ENCODE measurements at regions of chr7 and their contacts with region 1.

Region 1: DNA sequence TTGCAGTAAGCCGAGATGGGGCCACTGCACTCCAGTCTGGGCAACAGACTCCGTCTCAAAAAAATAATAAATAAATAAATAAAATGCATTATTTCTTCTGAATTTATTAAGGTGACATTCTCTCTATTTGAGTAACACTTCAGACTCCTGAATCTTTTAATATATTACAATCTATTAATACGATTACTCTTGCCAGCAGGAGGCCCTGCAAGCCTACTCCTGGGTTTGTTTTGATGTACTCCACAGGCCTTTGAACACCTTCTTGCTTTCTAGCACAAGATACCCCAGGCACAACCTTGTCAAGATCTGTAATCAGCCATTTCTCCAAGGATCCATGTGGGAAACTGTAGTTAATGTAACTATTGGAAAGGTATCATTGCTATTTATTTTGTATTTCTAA is 63.4 kb downstream of the COBL start:
- DNase-seq: peak; percentile 33
- ATAC-seq: peak; percentile 48; the same call in 1 of the 2 replicates
- H3K4me3 ChIP-seq: no peak overlapping the region
- H3K27ac ChIP-seq: no peak overlapping the region
- H3K4me1 ChIP-seq: peaks cover 27% of the 10 kb centered on the region
- H3K27me3 ChIP-seq: no peaks in the 10 kb centered on the region
- CTCF ChIP-seq: peak; percentile 47

Region 2: DNA sequence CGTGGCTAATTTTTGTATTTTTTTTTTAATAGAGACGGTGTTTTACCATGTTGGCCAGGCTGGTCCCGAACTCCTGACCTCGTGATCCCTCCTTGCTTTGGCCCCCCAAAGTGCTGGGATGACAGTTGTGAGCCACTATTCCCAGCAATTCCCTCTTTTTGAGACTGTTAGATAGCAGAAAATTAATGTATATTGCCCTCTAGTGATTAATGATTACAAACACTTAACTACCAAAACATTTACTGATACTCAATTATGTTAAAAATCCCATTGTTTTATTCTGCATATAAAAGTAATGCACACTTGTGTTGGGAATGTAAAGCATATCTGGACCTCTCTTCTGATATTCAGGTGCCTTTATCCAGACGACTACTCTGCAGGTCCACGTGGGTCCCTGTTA is 104.7 kb after region 1 on chr7:
- CTCF ChIA-PET with region 1: no interaction called
- POLR2A ChIA-PET with region 1: no interaction called
- intact Hi-C with region 1: loop called (anchors 1 kb)
- DNase-seq: no peak
- ATAC-seq: peak; percentile 64
- H3K4me3 ChIP-seq: no peak overlapping the region
- H3K27ac ChIP-seq: no peak overlapping the region
- H3K4me1 ChIP-seq: no peaks in the 10 kb centered on the region
- H3K27me3 ChIP-seq: no peaks in the 10 kb centered on the region
- CTCF ChIP-seq: peak; percentile 53; the same call in 1 of the 2 replicates

Region 3: GRCh38 chr7:51366930-51367613 is 113.9 kb after region 1 on chr7:
- CTCF ChIA-PET with region 1: no interaction called
- POLR2A ChIA-PET with region 1: no interaction called
- intact Hi-C with region 1: loop called (anchors 1 kb)
- DNase-seq: peak; percentile 75
- ATAC-seq: peak; percentile 96
- H3K4me3 ChIP-seq: no peak overlapping the region
- H3K27ac ChIP-seq: no peak overlapping the region
- H3K4me1 ChIP-seq: no peaks in the 10 kb centered on the region
- H3K27me3 ChIP-seq: no peaks in the 10 kb centered on the region
- CTCF ChIP-seq: peak; percentile 84

Region 4: DNA sequence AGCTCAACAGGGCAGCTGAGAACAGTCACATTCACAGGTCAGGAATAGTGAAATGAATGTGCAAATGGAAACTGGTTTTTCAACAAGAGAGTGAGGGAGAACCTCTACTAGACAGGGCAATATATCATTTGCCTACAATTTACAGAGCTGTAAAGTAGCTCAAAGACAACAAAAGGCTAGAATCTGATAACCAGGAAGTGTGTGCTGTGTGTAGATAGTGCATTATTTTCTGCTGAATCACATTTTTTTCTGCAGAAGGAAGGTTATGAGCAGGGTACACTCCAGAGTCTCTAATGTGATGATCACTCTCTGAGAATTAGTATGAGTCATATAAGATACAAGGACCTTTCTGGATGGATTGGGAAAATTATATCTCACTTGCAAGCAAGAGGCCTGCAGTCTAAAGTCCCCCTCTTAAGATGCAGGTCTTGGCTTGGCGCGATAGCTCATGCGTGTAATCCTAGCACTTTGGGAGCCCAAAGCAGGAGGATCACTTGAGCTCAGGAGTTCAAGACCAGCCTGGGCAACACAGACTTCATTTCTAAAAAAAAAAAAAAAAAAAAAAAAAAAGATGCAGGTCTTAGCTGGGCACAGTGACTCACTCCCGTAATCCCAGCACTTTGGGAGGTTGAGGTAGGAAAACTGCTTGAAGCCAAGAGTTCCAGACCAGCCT is 123.4 kb after region 1 on chr7:
- CTCF ChIA-PET with region 1: interaction called, 11 read pairs
- POLR2A ChIA-PET with region 1: no interaction called
- intact Hi-C with region 1: no loop called
- DNase-seq: peak; percentile 91
- ATAC-seq: peak; percentile 97
- H3K4me3 ChIP-seq: no peak overlapping the region
- H3K27ac ChIP-seq: peak overlapping the region; percentile 80
- H3K4me1 ChIP-seq: peaks cover 17% of the 10 kb centered on the region
- H3K27me3 ChIP-seq: no peaks in the 10 kb centered on the region
- CTCF ChIP-seq: no peak

Region 5: DNA sequence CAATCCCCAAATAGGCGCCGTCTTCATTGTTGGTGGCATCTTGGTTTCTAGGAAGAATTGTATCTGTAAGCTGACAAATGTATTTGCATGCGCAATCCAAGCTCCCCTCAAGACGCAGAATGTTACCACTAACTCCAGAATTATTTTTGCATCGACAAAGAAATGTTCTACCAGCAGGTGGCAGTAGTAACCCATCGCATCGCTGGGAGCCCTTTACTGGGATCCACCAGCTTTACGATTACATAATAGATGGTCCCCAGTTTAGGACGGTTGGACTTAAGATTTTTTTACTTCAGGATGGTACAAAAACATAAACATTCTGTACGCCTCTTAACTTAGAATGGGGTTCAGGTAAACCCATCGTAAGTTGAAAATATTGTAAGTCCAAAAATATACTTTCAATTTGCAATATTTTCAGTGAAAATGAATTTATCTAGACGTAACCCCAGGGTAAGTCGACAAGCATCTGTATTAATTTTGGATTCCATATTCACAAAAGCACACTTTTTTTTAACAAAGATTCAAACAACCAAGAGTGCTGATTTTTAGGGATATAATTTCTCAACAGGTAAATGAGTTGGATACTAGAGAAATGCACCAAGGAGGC is 177.4 kb after region 1 on chr7:
- CTCF ChIA-PET with region 1: no interaction called
- POLR2A ChIA-PET with region 1: no interaction called
- intact Hi-C with region 1: loop called (anchors 1 kb)
- DNase-seq: peak; percentile 76
- ATAC-seq: peak; percentile 46; the same call in 1 of the 2 replicates
- H3K4me3 ChIP-seq: no peak overlapping the region
- H3K27ac ChIP-seq: no peak overlapping the region
- H3K4me1 ChIP-seq: no peaks in the 10 kb centered on the region
- H3K27me3 ChIP-seq: peaks cover 23% of the 10 kb centered on the region
- CTCF ChIP-seq: peak; percentile 83